ENCODE measurements at regions of chr20 and their contacts with region 1.

Region 1: GRCh38 chr20:58236612-58237330 is 8.3 kb upstream of the ANKRD60 start:
- DNase-seq: peak; percentile 66 to 90 (median 82)
- ATAC-seq: peak; percentile 87
- H3K4me3 ChIP-seq: peak overlapping the region; percentile 71
- H3K4me3 Mint-ChIP-seq: peak overlapping the region; percentile 88
- H3K27ac ChIP-seq: peak overlapping the region; percentile 58 to 66
- H3K27ac Mint-ChIP-seq: peak overlapping the region; percentile 77
- H3K4me1 ChIP-seq: peaks cover 9% of the 10 kb centered on the region
- H3K4me1 Mint-ChIP-seq: peaks cover 13% of the 10 kb centered on the region
- H3K27me3 ChIP-seq: no peaks in the 10 kb centered on the region
- H3K27me3 Mint-ChIP-seq: no peaks in the 10 kb centered on the region
- CTCF ChIP-seq: peak; percentile 99

Region 2: DNA sequence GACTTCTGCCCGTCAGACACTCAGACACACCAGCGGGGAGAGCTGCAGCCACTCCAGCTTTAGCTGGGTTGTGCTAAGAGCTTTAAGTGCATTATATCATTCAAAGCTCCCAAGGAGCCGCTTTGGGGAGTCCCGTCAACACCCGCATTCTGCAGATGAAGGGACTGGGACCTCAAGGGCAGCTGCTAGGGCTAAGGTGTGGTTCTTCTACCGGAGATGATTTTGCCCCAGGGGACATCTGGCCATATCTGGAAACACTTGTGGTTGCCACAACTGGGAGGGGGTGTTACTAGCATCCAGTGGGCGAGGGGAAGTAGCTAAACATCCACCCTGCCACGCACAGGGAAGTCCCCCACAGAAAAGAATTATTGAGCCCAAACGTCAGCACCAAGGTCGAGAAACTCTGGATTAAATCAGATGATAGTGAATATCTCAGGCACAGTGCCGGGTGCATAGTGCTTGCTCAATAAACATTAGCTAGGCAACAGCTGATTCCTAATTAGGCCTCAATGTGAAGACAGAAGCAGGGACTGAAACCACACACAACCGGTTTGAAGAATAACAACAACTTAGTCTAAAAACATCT is 556.5 kb before region 1 on chr20:
- CTCF ChIA-PET with region 1: no interaction called
- POLR2A ChIA-PET with region 1: no interaction called
- intact Hi-C with region 1: no loop called
- DNase-seq: peak in 2 of 14 experiments; percentile 38 to 49
- ATAC-seq: no peak
- H3K4me3 ChIP-seq: no peak overlapping the region
- H3K4me3 Mint-ChIP-seq: no peak overlapping the region
- H3K27ac ChIP-seq: no peak overlapping the region
- H3K27ac Mint-ChIP-seq: no peak overlapping the region
- H3K4me1 ChIP-seq: peaks cover 15% of the 10 kb centered on the region
- H3K4me1 Mint-ChIP-seq: peaks cover 35% of the 10 kb centered on the region
- H3K27me3 ChIP-seq: peaks cover 0 to 2% of the 10 kb centered on the region in 2 experiments
- H3K27me3 Mint-ChIP-seq: no peaks in the 10 kb centered on the region
- CTCF ChIP-seq: no peak

Region 3: GRCh38 chr20:58407966-58408557 is 171.3 kb after region 1 on chr20:
- CTCF ChIA-PET with region 1: interaction called, 3 read pairs
- POLR2A ChIA-PET with region 1: no interaction called
- intact Hi-C with region 1: loop called in 1 of 2 experiments (anchors 5 kb)
- DNase-seq: peak in 5 of 14 experiments; percentile 22 to 46 (median 40)
- ATAC-seq: peak; percentile 77
- H3K4me3 ChIP-seq: no peak overlapping the region
- H3K4me3 Mint-ChIP-seq: peak overlapping the region; percentile 79
- H3K27ac ChIP-seq: peak overlapping the region; percentile 32 to 65
- H3K27ac Mint-ChIP-seq: peak overlapping the region; percentile 88
- H3K4me1 ChIP-seq: peaks cover 18% of the 10 kb centered on the region
- H3K4me1 Mint-ChIP-seq: peaks cover 38% of the 10 kb centered on the region
- H3K27me3 ChIP-seq: no peaks in the 10 kb centered on the region
- H3K27me3 Mint-ChIP-seq: no peaks in the 10 kb centered on the region
- CTCF ChIP-seq: no peak

Region 4: DNA sequence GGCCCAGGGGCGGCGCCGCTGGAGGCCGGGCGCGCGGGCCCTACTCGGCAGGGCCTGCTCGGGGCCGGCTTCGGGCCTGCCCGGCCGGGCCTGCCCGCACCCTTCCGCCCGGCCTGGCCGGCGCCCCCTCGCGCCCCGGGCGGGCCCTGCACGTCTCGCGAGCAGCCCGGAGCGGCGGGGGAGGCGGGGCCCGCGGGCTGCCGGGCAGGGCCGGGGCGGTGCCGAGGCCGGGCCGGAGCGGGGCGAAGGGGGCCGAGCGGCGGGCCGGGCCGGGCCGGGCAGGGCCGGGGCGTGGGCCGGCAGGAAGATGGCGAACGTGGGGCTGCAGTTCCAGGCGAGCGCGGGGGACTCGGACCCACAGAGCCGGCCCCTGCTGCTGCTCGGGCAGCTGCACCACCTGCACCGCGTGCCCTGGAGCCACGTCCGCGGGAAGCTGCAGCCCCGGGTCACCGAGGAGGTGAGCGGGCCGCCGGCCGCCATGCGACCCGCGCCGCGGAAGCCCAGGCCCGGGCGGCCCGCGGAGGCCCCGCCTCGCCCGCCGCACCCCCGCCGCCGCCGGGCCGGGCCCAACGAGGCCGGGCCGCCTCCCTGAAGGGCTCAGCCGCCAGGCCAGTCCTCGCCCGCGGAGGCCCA is 455.9 kb after region 1 on chr20 and contains the start of gene NPEPL1:
- CTCF ChIA-PET with region 1: no interaction called
- POLR2A ChIA-PET with region 1: no interaction called
- intact Hi-C with region 1: loop called in 1 of 2 experiments (anchors 5 kb)
- DNase-seq: peak in 12 of 14 experiments; percentile 22 to 87 (median 64)
- ATAC-seq: peak; percentile 95
- H3K4me3 ChIP-seq: peak within 1 kb of the TSS; percentile 50
- H3K4me3 Mint-ChIP-seq: peak within 1 kb of the TSS; percentile 83
- H3K27ac ChIP-seq: peak within 1 kb of the TSS; percentile 10 to 65
- H3K27ac Mint-ChIP-seq: peak within 1 kb of the TSS; percentile 81
- H3K4me1 ChIP-seq: peaks cover 23% of the 10 kb centered on the region
- H3K4me1 Mint-ChIP-seq: peaks cover 11% of the 10 kb centered on the region
- H3K27me3 ChIP-seq: no peaks in the 10 kb centered on the region
- H3K27me3 Mint-ChIP-seq: no peaks in the 10 kb centered on the region
- CTCF ChIP-seq: no peak
- total RNA-seq, gene NPEPL1: 58.3 to 61.1 TPM

Region 5: DNA sequence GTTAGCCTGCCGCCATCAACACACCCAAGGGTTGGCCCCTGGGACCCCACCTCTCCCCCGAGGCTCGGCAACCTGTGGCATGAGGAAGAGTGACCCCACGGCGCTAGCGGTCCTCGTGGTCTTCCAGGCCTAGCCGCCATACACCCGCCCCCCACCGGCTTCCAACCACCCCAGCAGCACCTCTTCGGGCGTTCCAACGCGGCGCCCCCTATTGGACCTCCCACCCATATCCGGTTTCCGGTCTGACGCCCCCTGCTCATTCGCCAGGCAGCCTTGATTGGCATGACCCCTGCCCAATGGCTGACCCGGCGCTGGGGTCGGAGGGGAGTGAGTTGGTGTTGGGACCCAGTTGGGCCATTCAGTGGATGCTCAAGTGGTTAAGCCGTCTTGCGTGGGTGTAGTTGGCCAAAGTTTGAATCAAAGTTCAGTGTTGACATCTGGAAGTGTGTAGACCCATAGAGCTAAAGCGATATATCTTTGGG is 614.0 kb after region 1 on chr20 and contains the start of gene GNAS-AS1:
- CTCF ChIA-PET with region 1: no interaction called
- POLR2A ChIA-PET with region 1: no interaction called
- intact Hi-C with region 1: loop called in 1 of 2 experiments (anchors 10 kb)
- DNase-seq: peak; percentile 62 to 85 (median 76)
- ATAC-seq: peak; percentile 88
- H3K4me3 ChIP-seq: peak within 1 kb of the TSS; percentile 56
- H3K4me3 Mint-ChIP-seq: peak within 1 kb of the TSS; percentile 94
- H3K27ac ChIP-seq: no peak within 1 kb of the TSS
- H3K27ac Mint-ChIP-seq: no peak within 1 kb of the TSS
- H3K4me1 ChIP-seq: peaks cover 47% of the 10 kb centered on the region
- H3K4me1 Mint-ChIP-seq: peaks cover 22% of the 10 kb centered on the region
- H3K27me3 ChIP-seq: peaks cover 48 to 50% of the 10 kb centered on the region in 2 experiments
- H3K27me3 Mint-ChIP-seq: peaks cover 60% of the 10 kb centered on the region
- CTCF ChIP-seq: no peak
- total RNA-seq, gene GNAS-AS1: not detected

Measured in CD4-positive, alpha-beta T cell (primary cell).